Kidney (tissue), 22 donors: ENCODE measurements at regions of chr5 and their contacts with region 1.

Region 1: GRCh38 chr5:159106569-159107282 is 7.0 kb upstream of the EBF1 start:
- DNase-seq: peak; percentile 84 to 91 (median 88)
- H3K4me3 ChIP-seq: peak overlapping the region; percentile 0 to 47 (median 41)
- H3K27ac ChIP-seq: no peak overlapping the region
- H3K4me1 ChIP-seq: peaks cover 0 to 7% (median 0%) of the 10 kb centered on the region in 3 donors
- H3K27me3 ChIP-seq: peaks cover 12% of the 10 kb centered on the region
- CTCF ChIP-seq: peak; percentile 81

Region 2: DNA sequence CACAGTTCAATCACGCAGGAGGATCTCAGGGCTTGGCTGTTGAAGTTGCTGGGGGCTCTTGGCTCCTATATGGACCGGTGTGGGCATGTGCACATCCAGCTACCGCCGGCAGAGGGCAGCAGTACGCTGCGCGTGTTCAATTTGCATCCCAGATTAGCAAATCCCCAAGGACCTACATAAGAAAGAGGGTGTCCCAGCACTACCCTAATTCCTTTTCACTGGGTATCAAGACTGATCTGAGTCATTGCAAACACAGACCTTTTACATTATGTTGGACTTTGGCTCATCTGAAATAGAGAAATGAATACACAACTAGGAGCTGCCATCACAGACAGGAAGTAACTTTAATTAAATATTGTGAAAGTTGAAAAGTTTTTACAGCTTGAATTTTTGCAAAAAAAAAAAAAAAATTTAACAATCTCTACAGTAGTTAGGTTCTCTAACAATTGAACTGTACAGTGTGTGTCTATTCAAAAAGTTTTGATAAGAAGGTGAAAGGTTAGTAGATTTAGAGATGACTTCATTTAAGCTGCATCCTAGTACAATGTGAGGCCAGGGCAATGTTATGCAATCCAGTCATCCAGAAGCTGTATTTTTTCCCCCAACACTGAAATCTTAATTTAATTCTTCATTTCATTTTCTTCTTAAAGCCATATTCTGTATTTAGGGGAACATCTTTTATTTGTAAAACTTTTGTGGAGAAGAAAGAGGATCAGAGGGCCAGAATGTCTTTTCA is 411.0 kb before region 1 on chr5:
- intact Hi-C with region 1: loop called (anchors 10 kb)
- DNase-seq: peak; percentile 77 to 80 (median 78)
- H3K4me3 ChIP-seq: no peak overlapping the region
- H3K27ac ChIP-seq: no peak overlapping the region
- H3K4me1 ChIP-seq: peaks cover 0 to 3% (median 0%) of the 10 kb centered on the region in 3 donors
- H3K27me3 ChIP-seq: peaks cover 2% of the 10 kb centered on the region
- CTCF ChIP-seq: peak; percentile 92

Region 3: DNA sequence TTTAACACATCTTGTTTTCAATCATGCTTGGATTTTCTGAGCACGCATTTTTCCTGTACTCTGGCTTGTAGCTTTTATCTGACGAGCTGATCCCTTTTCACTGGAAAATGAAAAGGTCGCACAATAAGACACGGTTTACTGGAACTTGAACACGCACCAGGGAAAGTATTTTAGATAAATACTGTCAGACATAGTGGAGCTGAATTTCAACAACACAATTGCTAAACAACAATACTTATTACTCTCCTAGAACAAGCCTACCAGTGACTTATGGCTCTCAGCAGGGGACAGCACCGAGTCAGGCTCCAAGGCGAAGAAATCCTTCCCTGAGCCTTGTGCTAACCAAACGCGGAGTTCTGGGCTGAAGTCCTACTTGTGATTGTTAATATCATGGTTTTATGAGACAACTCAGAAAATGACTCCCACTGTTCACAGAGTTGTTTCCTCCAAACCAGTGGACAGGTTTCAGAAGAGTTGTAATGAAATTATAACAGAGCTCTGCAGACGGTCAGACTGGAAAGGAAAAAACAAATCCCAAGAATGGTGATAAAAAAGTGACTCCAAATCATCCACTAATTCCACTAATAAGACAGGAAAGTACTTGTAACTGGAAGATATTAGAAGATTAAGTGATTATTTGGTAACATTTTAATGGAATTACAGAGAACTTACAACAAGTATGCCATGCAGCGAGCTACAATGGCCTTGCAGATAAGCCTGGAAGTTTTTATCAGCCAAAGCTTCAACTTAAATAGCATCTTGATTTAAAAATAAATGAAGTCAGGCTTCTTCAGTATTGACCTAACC is 366.6 kb before region 1 on chr5:
- intact Hi-C with region 1: no loop called
- DNase-seq: peak in 1 of 5 donors; percentile 28
- H3K4me3 ChIP-seq: no peak overlapping the region
- H3K27ac ChIP-seq: peak overlapping the region in 1 of 2 donors; percentile 20
- H3K4me1 ChIP-seq: no peaks in the 10 kb centered on the region
- H3K27me3 ChIP-seq: no peaks in the 10 kb centered on the region
- CTCF ChIP-seq: peak; percentile 13

Region 4: DNA sequence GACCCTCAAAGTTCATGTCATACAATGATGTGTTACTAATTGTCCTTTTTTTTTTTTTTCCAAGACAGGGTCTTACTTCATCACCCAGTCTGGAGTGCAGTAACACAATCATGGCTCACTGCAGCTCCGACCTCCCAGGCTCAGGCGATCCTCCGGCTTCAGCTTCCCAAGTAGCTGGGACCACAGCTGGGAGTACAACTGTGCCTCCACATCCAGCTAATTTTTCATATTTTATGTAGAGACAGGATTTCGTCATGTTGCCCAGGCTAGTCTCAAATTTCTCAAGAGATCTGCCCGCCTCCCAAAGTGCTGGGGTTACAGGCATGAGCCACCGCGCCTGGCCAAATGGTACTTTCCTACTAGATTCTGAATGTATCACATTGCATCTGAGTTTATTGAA is 42.4 kb after region 1 on chr5:
- intact Hi-C with region 1: no loop called
- DNase-seq: no peak
- H3K4me3 ChIP-seq: no peak overlapping the region
- H3K27ac ChIP-seq: no peak overlapping the region
- H3K4me1 ChIP-seq: no peaks in the 10 kb centered on the region
- H3K27me3 ChIP-seq: no peaks in the 10 kb centered on the region
- CTCF ChIP-seq: no peak

Region 5: GRCh38 chr5:159377653-159378052 is 270.9 kb after region 1 on chr5:
- intact Hi-C with region 1: no loop called
- DNase-seq: no peak
- H3K4me3 ChIP-seq: no peak overlapping the region
- H3K27ac ChIP-seq: no peak overlapping the region
- H3K4me1 ChIP-seq: no peaks in the 10 kb centered on the region
- H3K27me3 ChIP-seq: no peaks in the 10 kb centered on the region
- CTCF ChIP-seq: no peak

Region 6: GRCh38 chr5:159515909-159516415 is 409.2 kb after region 1 on chr5:
- intact Hi-C with region 1: no loop called
- DNase-seq: peak; percentile 70 to 79 (median 74)
- H3K4me3 ChIP-seq: no peak overlapping the region
- H3K27ac ChIP-seq: no peak overlapping the region
- H3K4me1 ChIP-seq: no peaks in the 10 kb centered on the region
- H3K27me3 ChIP-seq: no peaks in the 10 kb centered on the region
- CTCF ChIP-seq: peak; percentile 80